Heart left ventricle (tissue), 16 donors: ENCODE measurements at regions of chr1 and their contacts with region 1.

Region 1: GRCh38 chr1:182391362-182392044 is at the start of gene GLUL:
- DNase-seq: peak; percentile 94 to 98 (median 95)
- ATAC-seq: peak; percentile 87 to 95 (median 92)
- H3K4me3 ChIP-seq: peak within 1 kb of the TSS; percentile 65 to 97 (median 90)
- H3K27ac ChIP-seq: peak within 1 kb of the TSS; percentile 93 to 100 (median 99)
- H3K4me1 ChIP-seq: peaks cover 0 to 71% (median 32%) of the 10 kb centered on the region in 12 donors
- H3K27me3 ChIP-seq: no peaks in the 10 kb centered on the region
- CTCF ChIP-seq: peak in 7 of 12 donors; percentile 8 to 48 (median 16)
- POLR2A ChIP-seq: peak; percentile 93 to 99
- total RNA-seq, gene GLUL: 276 to 965 (median 520) TPM

Region 2: GRCh38 chr1:181308098-181308497 is 1083.4 kb before region 1 on chr1:
- intact Hi-C with region 1: no loop called
- DNase-seq: no peak
- ATAC-seq: no peak
- H3K4me3 ChIP-seq: no peak overlapping the region
- H3K27ac ChIP-seq: no peak overlapping the region
- H3K4me1 ChIP-seq: no peaks in the 10 kb centered on the region
- H3K27me3 ChIP-seq: peaks cover 0 to 34% (median 4%) of the 10 kb centered on the region in 9 donors
- CTCF ChIP-seq: no peak
- POLR2A ChIP-seq: no peak

Region 3: GRCh38 chr1:182229921-182230491 is 161.5 kb before region 1 on chr1:
- intact Hi-C with region 1: loop called in 1 of 10 experiments (anchors 5 kb)
- DNase-seq: no peak
- ATAC-seq: peak; percentile 65 to 91 (median 82)
- H3K4me3 ChIP-seq: no peak overlapping the region
- H3K27ac ChIP-seq: no peak overlapping the region
- H3K4me1 ChIP-seq: peaks cover 0 to 23% (median 7%) of the 10 kb centered on the region in 12 donors
- H3K27me3 ChIP-seq: no peaks in the 10 kb centered on the region
- CTCF ChIP-seq: no peak
- POLR2A ChIP-seq: no peak

Region 4: DNA sequence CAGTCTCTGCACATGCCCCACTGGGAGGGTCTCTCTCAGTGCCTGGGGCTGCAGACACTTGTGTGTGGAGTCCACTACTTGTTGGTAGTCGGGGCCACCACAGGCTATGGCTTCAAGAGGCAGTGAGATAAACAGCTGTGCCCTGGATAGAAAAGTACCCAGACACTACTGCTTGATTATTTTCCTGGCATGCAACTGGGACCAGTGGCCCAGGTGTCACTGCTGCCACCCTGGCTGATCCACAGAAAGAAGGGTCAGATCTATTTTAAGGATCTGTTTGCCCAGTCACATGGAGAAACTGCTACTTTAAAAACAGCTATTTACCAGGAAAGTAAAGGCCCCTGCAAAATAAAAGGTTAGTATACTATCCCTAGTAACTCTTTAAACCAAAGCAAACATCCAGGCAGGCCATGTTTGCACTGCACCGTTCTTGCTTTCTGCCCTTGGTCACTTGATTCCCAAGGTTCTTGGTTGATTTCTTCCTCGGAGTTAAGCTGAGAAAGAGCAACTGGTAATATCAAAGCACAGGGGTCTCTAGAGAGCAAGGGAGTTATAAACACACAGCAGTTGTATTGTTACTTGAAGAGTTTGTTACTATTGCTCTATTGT is 99.8 kb before region 1 on chr1:
- intact Hi-C with region 1: loop called in 3 of 10 experiments (anchors 2 to 10 kb)
- DNase-seq: peak in 2 of 5 donors; percentile 34 to 41
- ATAC-seq: peak; percentile 29 to 69 (median 56)
- H3K4me3 ChIP-seq: no peak overlapping the region
- H3K27ac ChIP-seq: peak overlapping the region in 6 of 12 donors; percentile 11 to 81 (median 25)
- H3K4me1 ChIP-seq: peaks cover 0 to 31% (median 16%) of the 10 kb centered on the region in 12 donors
- H3K27me3 ChIP-seq: no peaks in the 10 kb centered on the region
- CTCF ChIP-seq: no peak
- POLR2A ChIP-seq: no peak

Region 5: GRCh38 chr1:182330303-182330702 is 61.2 kb before region 1 on chr1:
- intact Hi-C with region 1: loop called in 3 of 10 experiments (anchors 5 kb)
- DNase-seq: no peak
- ATAC-seq: no peak
- H3K4me3 ChIP-seq: no peak overlapping the region
- H3K27ac ChIP-seq: no peak overlapping the region
- H3K4me1 ChIP-seq: no peaks in the 10 kb centered on the region
- H3K27me3 ChIP-seq: no peaks in the 10 kb centered on the region
- CTCF ChIP-seq: no peak
- POLR2A ChIP-seq: no peak